ENCODE measurements at regions of chr17 and their contacts with region 1.

Region 1: DNA sequence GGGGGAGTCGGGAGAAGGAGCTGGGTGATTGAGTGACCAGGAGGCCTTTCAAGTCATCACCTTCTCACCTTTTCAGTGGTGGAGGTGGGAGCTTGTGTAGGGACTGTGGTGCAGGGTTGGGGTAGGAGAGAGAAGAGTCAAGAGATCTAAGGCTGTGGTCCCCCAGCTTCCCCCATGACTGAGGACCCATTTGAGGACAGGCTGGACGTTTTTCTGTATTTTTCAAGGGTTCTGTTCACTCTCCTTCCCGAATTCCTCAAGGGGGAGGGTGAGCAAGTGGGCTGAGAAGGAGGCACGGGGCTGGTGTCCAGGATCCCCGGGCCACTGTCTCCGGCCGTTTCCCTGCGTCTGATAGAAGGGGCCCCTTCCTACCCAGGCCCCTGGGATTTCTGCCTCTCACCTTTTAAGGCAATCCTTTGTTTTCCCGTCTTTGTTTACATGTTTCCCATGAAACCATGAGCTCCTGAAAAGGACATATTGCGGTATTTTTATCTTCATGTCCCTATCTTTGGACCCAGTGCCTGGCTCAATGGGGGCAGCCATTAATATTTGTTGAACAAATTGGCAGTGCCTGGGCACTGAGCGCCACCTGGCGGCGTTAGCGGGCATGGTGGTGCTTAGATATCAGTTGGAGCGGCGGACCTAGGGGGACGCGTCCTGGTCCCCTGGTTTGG is 9.2 kb upstream of the CD300A start:
- DNase-seq: peak; percentile 72
- H3K4me3 ChIP-seq: no peak overlapping the region
- H3K27ac ChIP-seq: no peak overlapping the region
- H3K4me1 ChIP-seq: peaks cover 15% of the 10 kb centered on the region
- H3K27me3 ChIP-seq: no peaks in the 10 kb centered on the region
- CTCF ChIP-seq: peak; percentile 97 to 99 (median 98)
- POLR2A ChIP-seq: no peak

Region 2: GRCh38 chr17:74203439-74204240 is 253.6 kb before region 1 on chr17 and contains the start of gene RPL38:
- intact Hi-C with region 1: loop called (anchors 5 kb)
- DNase-seq: peak; percentile 96
- H3K4me3 ChIP-seq: peak within 1 kb of the TSS; percentile 58
- H3K27ac ChIP-seq: peak within 1 kb of the TSS; percentile 51 to 64
- H3K4me1 ChIP-seq: peaks cover 18% of the 10 kb centered on the region
- H3K27me3 ChIP-seq: no peaks in the 10 kb centered on the region
- CTCF ChIP-seq: peak; percentile 92 to 99 (median 98)
- POLR2A ChIP-seq: peak; percentile 70
- total RNA-seq, gene RPL38: 531 to 611 TPM

Region 3: DNA sequence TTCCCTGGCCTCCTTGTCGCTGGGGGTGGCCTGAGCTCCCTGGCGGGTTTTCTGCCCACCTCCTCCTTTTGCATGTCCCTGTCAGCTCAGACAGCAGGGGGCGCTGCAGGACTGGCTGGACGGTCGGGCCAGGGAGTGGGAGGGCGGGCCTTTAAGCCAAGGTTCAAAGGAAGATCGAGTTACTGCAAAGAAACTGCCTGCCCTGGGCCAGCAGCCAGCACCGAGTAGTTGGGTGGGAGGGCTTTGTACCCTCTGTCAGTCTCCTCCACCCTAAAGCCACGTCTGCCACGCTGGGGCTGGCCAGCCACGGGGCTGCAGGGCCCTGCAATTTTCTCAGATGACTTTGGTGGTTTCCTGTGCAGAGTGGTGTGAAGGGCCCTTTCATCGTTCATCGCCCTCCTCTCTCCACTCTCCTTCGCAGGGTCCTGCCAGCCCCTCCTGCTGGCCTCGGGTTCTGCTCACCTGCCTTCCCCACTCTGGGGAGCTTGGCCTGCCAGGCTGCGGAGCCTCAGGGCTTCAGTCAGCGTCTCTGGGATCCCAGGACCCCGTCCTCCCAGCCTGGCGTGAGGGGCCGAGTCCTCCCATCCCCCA is 77.7 kb before region 1 on chr17:
- intact Hi-C with region 1: loop called (anchors 1 kb)
- DNase-seq: peak; percentile 91
- H3K4me3 ChIP-seq: peak overlapping the region in 1 of 2 donors; percentile 4
- H3K27ac ChIP-seq: peak overlapping the region; percentile 49 to 69
- H3K4me1 ChIP-seq: peaks cover 7% of the 10 kb centered on the region
- H3K27me3 ChIP-seq: no peaks in the 10 kb centered on the region
- CTCF ChIP-seq: peak; percentile 98 to 99 (median 99)
- POLR2A ChIP-seq: no peak

Region 4: GRCh38 chr17:74417178-74418045 is 39.9 kb before region 1 on chr17:
- intact Hi-C with region 1: no loop called
- DNase-seq: no peak
- H3K4me3 ChIP-seq: no peak overlapping the region
- H3K27ac ChIP-seq: no peak overlapping the region
- H3K4me1 ChIP-seq: no peaks in the 10 kb centered on the region
- H3K27me3 ChIP-seq: no peaks in the 10 kb centered on the region
- CTCF ChIP-seq: no peak
- POLR2A ChIP-seq: no peak

Measured in prostate gland (tissue), 2 donors.